Psoas muscle (tissue), 8 donors: ENCODE measurements at regions of chr7 and their contacts with region 1.

Region 1: GRCh38 chr7:5679813-5680473 is 101.5 kb downstream of the RNF216 start:
- DNase-seq: peak; percentile 52 to 76
- ATAC-seq: peak in 1 of 4 donors; percentile 14
- H3K4me3 ChIP-seq: no peak overlapping the region
- H3K27ac ChIP-seq: no peak overlapping the region
- H3K4me1 ChIP-seq: peaks cover 34% of the 10 kb centered on the region
- H3K27me3 ChIP-seq: no peaks in the 10 kb centered on the region
- CTCF ChIP-seq: no peak

Region 2: DNA sequence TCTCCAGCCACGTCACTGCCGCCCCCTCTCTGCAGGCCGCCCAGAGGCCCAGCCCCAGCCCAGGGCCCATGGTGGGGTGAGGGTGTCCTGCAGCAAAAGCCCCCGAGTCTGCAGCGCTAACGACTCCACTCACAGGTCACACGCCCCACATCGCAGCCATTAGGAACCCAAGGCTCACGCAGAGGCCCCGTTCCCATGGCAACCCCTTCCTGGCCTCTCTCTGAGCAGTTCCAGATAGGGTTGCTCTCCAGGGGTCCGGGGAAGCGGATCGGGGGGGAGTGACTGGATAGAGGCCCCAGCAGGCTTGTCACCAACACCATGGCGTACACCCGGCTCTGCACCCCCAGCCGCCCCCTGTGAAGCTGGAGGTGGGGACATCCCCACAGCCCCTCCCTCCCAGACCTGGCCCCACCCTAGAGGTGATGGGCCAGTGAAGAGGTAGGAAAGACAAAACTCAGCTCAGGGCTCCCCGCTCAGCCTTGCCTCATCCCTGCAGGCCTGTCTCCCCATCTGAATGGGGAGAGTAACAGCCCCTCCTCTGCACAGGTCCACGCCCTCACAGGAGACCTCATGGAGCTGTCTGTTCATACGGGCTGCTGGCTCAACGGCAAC is 297.6 kb before region 1 on chr7:
- intact Hi-C with region 1: loop called in 1 of 2 experiments (anchors 10 kb)
- DNase-seq: no peak
- ATAC-seq: peak in 2 of 4 donors; percentile 18 to 21
- H3K4me3 ChIP-seq: no peak overlapping the region
- H3K27ac ChIP-seq: no peak overlapping the region
- H3K4me1 ChIP-seq: peaks cover 22% of the 10 kb centered on the region
- H3K27me3 ChIP-seq: no peaks in the 10 kb centered on the region
- CTCF ChIP-seq: no peak